WTC11 (cell line): ENCODE measurements at regions of chr1 and their contacts with region 1.

Region 1: DNA sequence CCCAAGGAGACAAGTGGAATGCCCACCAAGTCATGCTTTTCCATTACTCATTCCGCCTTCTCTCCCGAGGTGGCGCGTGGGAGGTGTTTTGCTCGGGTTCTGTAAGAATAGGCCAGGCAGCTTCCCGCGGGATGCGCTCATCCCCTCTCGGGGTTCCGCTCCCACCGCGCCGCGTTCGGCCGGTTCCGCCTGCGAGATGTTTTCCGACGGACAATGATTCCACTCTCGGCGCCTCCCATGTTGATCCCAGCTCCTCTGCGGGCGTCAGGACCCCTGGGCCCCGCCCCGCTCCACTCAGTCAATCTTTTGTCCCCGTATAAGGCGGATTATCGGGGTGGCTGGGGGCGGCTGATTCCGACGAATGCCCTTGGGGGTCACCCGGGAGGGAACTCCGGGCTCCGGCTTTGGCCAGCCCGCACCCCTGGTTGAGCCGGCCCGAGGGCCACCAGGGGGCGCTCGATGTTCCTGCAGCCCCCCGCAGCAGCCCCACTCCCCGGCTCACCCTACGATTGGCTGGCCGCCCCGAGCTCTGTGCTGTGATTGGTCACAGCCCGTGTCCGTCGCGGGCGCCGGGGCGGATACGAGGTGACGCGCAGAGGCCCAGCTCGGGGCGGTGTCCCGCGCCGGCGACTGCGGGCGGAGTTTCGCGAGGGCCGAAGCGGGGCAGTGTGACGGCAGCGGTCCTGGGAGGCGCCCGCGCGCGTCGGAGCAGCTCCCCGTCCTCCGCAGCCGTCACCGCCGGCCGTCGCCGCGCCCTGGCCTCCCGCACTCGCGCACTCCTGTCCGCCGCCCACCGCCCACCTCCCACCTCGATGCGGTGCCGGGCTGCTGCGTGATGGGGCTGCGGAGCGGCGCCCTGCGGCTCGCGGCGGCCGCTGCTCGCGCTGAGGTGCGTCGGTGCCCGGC is at the start of gene KIF1B:
- DNase-seq: peak; percentile 99
- ATAC-seq: peak; percentile 95
- H3K4me3 Mint-ChIP-seq: peak within 1 kb of the TSS; percentile 92
- H3K27ac Mint-ChIP-seq: peak within 1 kb of the TSS; percentile 94
- H3K4me1 Mint-ChIP-seq: peaks cover 27% of the 10 kb centered on the region
- H3K27me3 Mint-ChIP-seq: peaks cover 4% of the 10 kb centered on the region; the same call in 1 of the 2 replicates
- CTCF ChIP-seq: peak; percentile 92
- total RNA-seq, gene KIF1B: 63.1 to 70.1 TPM (median 64.9 TPM) in 3 replicates

Region 2: GRCh38 chr1:10193288-10193687 is 16.9 kb before region 1 on chr1:
- CTCF ChIA-PET with region 1: interaction called, 29 read pairs
- POLR2A ChIA-PET with region 1: no interaction called
- DNase-seq: no peak
- ATAC-seq: no peak
- H3K4me3 Mint-ChIP-seq: no peak overlapping the region
- H3K27ac Mint-ChIP-seq: no peak overlapping the region
- H3K4me1 Mint-ChIP-seq: peaks cover 2% of the 10 kb centered on the region; the same call in 1 of the 2 replicates
- H3K27me3 Mint-ChIP-seq: no peaks in the 10 kb centered on the region
- CTCF ChIP-seq: no peak

Region 3: GRCh38 chr1:10220200-10220599 is 10.0 kb after region 1 on chr1:
- CTCF ChIA-PET with region 1: interaction called, 27 read pairs
- POLR2A ChIA-PET with region 1: interaction called, 6 read pairs
- DNase-seq: no peak
- ATAC-seq: no peak
- H3K4me3 Mint-ChIP-seq: no peak overlapping the region
- H3K27ac Mint-ChIP-seq: no peak overlapping the region
- H3K4me1 Mint-ChIP-seq: peaks cover 13% of the 10 kb centered on the region
- H3K27me3 Mint-ChIP-seq: no peaks in the 10 kb centered on the region
- CTCF ChIP-seq: no peak

Region 4: DNA sequence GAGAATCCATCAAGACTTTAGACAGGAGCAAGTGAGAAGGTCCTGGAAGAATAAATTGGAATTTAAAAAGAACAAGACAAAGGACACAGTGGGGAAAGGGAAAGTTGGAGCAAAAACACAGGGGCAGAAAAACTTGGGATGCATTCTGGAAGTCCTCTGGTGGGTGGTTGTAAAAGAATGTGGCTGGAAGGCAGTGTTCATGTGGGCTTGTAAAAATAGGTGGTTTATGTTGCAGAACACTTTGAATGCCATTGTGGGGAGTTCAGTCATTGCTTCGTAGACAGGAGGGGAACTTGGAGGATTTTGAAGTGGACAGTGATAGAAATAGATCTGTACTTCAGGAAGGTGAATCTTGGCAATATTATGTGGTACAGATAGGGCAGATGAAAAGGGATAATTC is 15.4 kb after region 1 on chr1:
- CTCF ChIA-PET with region 1: interaction called, 27 read pairs
- POLR2A ChIA-PET with region 1: interaction called, 6 read pairs
- DNase-seq: no peak
- ATAC-seq: no peak
- H3K4me3 Mint-ChIP-seq: no peak overlapping the region
- H3K27ac Mint-ChIP-seq: peak overlapping the region; percentile 3; the same call in 1 of the 2 replicates
- H3K4me1 Mint-ChIP-seq: no peaks in the 10 kb centered on the region
- H3K27me3 Mint-ChIP-seq: no peaks in the 10 kb centered on the region; the same call in 1 of the 2 replicates
- CTCF ChIP-seq: no peak

Region 5: GRCh38 chr1:10338047-10338446 is 127.9 kb after region 1 on chr1:
- CTCF ChIA-PET with region 1: interaction called, 17 read pairs
- POLR2A ChIA-PET with region 1: interaction called, 5 read pairs
- DNase-seq: peak; percentile 66
- ATAC-seq: peak; percentile 95
- H3K4me3 Mint-ChIP-seq: no peak overlapping the region
- H3K27ac Mint-ChIP-seq: no peak overlapping the region
- H3K4me1 Mint-ChIP-seq: peaks cover 16% of the 10 kb centered on the region
- H3K27me3 Mint-ChIP-seq: no peaks in the 10 kb centered on the region
- CTCF ChIP-seq: no peak; the same call in 1 of the 2 replicates